Heart right ventricle (tissue), 16 donors: ENCODE measurements at regions of chr13 and their contacts with region 1.

Region 1: DNA sequence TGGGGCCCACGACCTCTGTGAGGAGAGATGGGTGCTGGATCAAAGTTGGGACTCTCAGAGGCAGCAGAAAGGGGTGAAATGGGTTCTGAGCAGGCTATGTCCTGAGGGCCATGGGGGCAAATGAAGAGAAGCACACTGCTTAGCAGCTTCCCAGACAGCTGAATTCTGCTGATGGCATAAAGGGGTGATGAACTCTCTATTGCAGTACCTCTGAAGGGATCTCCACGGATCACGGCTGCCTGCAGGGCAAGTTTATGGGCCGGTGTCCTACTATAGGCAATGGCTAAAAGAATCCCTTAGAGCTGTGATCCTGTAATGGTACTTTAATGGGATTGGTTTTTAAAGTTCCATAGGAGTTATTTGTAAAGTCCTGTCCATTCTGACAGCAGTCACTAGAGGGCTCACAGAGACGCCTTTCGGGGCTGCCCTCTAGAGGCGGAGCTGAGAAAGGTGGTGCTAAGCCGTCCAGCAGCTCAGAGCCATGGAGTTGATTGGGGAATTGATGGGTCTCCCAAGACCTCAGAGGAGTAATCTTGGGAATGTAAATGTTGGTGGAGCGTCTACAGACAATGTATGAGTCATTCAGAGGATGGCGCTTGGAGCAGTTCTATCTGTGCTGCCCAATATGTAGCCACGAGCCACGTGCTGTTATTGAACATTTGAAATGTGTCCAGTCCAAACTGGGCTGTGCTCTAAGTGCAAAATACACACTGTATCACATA is 287.3 kb downstream of the COG6 start:
- DNase-seq: peak; percentile 61 to 62
- ATAC-seq: peak; percentile 86 to 93 (median 90)
- H3K4me3 ChIP-seq: no peak overlapping the region
- H3K27ac ChIP-seq: peak overlapping the region in 2 of 10 donors; percentile 8 to 12
- H3K4me1 ChIP-seq: peaks cover 0 to 13% (median 0%) of the 10 kb centered on the region in 9 donors
- H3K27me3 ChIP-seq: no peaks in the 10 kb centered on the region
- CTCF ChIP-seq: peak; percentile 78 to 98 (median 88)

Region 2: DNA sequence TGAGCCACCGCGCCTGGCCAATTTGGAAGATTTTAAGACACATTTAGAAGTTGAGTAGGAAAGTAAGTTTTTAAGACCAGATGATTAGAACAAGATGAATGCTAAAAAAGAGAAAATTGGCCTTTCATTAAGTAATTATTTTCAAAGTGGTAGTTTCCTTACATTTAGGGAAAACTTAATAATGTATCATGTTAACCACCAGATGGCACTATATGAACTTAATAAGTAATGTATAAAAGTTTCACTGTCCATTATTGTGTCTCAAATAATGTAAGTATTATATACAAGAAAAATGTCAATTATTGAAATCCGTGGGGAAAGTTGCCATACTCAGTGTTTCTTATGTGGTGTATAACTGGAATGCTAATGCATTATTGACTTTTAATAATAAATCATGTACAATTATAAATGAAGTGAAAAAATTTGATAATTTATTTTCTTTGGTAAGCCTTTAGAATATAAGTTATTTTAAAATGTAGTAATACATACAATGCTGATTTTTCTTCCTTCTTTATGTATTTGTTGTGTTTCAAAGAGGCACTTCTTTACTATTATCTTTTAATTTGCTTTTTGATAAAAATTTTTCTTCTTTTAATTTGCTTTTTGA is 258.1 kb before region 1 on chr13:
- intact Hi-C with region 1: loop called in 1 of 10 experiments (anchors 10 kb)
- DNase-seq: no peak
- ATAC-seq: no peak
- H3K4me3 ChIP-seq: no peak overlapping the region
- H3K27ac ChIP-seq: no peak overlapping the region
- H3K4me1 ChIP-seq: peaks cover 0 to 9% (median 0%) of the 10 kb centered on the region in 9 donors
- H3K27me3 ChIP-seq: no peaks in the 10 kb centered on the region
- CTCF ChIP-seq: peak in 8 of 9 donors; percentile 28 to 65 (median 50)

Region 3: GRCh38 chr13:39699274-39699673 is 243.4 kb before region 1 on chr13:
- intact Hi-C with region 1: loop called in 1 of 10 experiments (anchors 10 kb)
- DNase-seq: no peak
- ATAC-seq: no peak
- H3K4me3 ChIP-seq: peak overlapping the region in 2 of 10 donors; percentile 2 to 19
- H3K27ac ChIP-seq: no peak overlapping the region
- H3K4me1 ChIP-seq: peaks cover 0 to 17% (median 0%) of the 10 kb centered on the region in 9 donors
- H3K27me3 ChIP-seq: no peaks in the 10 kb centered on the region
- CTCF ChIP-seq: no peak

Region 4: GRCh38 chr13:39777527-39778061 is 165.1 kb before region 1 on chr13:
- intact Hi-C with region 1: loop called in 3 of 10 experiments (anchors 5 to 10 kb)
- DNase-seq: no peak
- ATAC-seq: peak in 1 of 8 donors; percentile 56
- H3K4me3 ChIP-seq: no peak overlapping the region
- H3K27ac ChIP-seq: peak overlapping the region in 1 of 10 donors; percentile 51
- H3K4me1 ChIP-seq: peaks cover 0 to 17% (median 0%) of the 10 kb centered on the region in 9 donors
- H3K27me3 ChIP-seq: no peaks in the 10 kb centered on the region
- CTCF ChIP-seq: peak in 5 of 9 donors; percentile 22 to 41 (median 29)